Lower lobe of right lung (tissue), 2 donors: ENCODE measurements at regions of chrX and their contacts with region 1.

Region 1: DNA sequence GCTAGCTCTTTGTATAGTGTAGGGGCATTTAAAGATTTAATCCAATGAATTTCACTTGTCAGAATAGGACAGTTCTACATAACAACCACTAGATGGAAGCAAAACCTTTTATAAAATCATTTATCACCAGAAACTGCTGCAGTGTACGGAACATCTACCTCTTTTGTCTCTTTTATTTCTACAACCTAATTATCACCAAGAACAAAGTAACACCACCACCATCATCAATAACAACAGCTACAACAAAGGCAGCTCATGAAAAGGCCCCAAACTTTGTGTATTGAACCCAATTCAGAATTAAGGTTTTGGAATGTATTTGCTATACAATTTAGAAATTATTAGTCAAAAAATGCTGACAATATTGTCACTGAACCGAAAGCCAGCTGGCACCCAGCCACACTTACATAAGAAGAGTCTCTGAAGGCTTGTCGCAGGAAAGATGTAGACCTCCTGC is 260.9 kb upstream of the RPS6KA3 start:
- DNase-seq: no peak
- ATAC-seq: peak; percentile 49 to 71
- H3K4me3 ChIP-seq: no peak overlapping the region
- H3K27ac ChIP-seq: no peak overlapping the region
- H3K4me1 ChIP-seq: no peaks in the 10 kb centered on the region
- H3K27me3 ChIP-seq: no peaks in the 10 kb centered on the region
- CTCF ChIP-seq: peak; percentile 48

Region 2: GRCh38 chrX:21745756-21746155 is 1218.2 kb after region 1 on chrX:
- intact Hi-C with region 1: loop called (anchors 10 kb)
- DNase-seq: no peak
- ATAC-seq: peak in 1 of 2 donors; percentile 61
- H3K4me3 ChIP-seq: no peak overlapping the region
- H3K27ac ChIP-seq: no peak overlapping the region
- H3K4me1 ChIP-seq: no peaks in the 10 kb centered on the region
- H3K27me3 ChIP-seq: no peaks in the 10 kb centered on the region
- CTCF ChIP-seq: peak; percentile 51